Heart right ventricle (tissue), 16 donors: ENCODE measurements at regions of chr11 and their contacts with region 1.

Region 1: DNA sequence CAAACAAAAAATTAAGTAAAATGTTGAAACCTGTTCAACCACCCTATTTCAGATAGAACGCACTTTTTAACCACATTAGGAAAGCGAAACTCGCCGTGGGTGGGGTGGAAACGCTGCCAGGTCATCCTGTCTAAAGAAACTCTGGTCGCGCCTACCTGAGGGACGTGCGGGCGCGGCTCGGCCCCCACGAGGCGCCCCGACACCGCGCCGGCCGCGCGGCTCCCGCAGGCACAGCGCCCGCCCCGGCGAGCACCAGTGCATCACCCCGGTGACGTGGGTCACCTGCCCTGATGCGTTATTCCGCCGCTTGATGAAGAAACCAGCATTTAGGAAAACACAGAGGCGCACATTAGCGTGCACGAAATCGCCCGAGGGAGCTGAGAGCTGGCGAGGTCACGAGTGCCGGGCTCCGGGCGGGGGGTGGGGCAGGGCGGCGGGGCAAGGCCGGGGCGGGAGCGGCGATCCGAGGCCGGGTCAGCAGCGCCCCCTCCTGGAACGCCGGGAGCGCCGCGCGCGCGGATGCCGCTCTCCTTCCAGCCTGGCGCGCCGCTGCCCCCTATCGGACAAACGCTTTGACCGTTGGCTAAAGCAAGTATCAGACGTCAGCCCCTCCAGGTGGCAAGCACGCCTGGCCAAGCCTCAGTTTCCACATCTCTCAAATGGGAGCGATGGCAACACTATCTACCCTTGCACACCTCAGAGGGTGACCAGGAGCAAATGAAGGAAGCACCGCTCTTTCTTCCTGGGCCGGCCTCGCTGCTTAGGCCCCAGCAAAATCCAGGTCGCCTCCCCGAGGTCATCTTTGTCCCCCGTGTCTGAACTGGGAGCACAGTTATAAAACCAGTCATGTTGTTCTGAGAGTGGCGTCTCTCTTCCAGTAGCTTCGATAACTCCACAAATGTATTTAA is 15.7 kb upstream of the SNX32 start:
- DNase-seq: peak; percentile 94 to 97
- ATAC-seq: peak; percentile 92 to 97 (median 96)
- H3K4me3 ChIP-seq: peak overlapping the region; percentile 23 to 75 (median 62)
- H3K27ac ChIP-seq: peak overlapping the region in 9 of 10 donors; percentile 12 to 84 (median 59)
- H3K4me1 ChIP-seq: peaks cover 0 to 26% (median 9%) of the 10 kb centered on the region in 9 donors
- H3K27me3 ChIP-seq: no peaks in the 10 kb centered on the region
- CTCF ChIP-seq: peak; percentile 99 to 100 (median 100)

Region 2: GRCh38 chr11:65625628-65626342 is 192.3 kb before region 1 on chr11:
- intact Hi-C with region 1: loop called in 3 of 10 experiments (anchors 5 to 10 kb)
- DNase-seq: peak; percentile 54 to 69
- ATAC-seq: peak; percentile 51 to 84 (median 78)
- H3K4me3 ChIP-seq: no peak overlapping the region
- H3K27ac ChIP-seq: peak overlapping the region in 1 of 10 donors; percentile 9
- H3K4me1 ChIP-seq: peaks cover 0 to 22% (median 7%) of the 10 kb centered on the region in 9 donors
- H3K27me3 ChIP-seq: no peaks in the 10 kb centered on the region
- CTCF ChIP-seq: peak; percentile 54 to 75 (median 69)

Region 3: DNA sequence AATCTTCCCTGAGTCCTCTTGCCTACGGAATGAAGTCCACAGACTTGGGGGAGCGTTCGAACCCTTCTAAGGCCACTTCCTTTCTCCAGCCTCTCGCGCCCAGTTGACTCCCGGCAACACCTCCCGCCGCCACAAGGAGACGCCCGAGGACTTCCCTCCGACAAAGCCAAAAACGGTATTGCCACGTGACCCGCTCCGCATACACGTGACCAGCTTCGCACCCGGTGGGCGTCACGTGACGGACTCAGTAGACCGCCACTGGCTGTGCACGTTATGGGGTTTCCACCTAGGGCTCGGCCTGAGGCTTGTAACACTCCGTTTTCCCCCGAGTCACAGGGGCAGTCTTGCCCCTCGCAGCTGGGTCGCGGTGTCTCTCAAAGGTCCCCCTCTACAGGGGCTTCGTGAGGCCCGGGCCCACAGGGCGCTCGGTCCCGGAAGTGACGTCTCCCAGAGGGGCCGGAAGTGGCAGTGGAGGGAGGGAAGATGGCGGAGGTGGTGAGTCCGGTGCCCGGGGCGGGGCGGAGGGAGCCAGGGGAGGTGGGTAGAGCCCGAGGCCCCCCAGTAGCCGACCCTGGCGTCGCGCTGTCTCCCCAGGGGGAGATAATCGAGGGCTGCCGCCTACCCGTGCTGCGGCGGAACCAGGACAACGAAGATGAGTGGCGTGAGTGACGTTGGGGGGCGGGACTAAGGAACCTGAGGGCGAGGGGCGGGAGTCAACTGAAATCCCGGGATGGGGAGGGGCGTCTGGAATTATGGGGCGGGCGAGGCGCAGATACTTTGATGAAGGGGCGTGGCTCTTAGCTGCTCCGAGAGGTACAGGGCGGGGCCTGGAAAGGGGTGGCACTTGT is 106.1 kb before region 1 on chr11 and contains the start of gene KAT5:
- intact Hi-C with region 1: loop called (anchors 1 to 10 kb)
- DNase-seq: peak; percentile 98
- ATAC-seq: peak; percentile 92 to 96 (median 95)
- H3K4me3 ChIP-seq: peak within 1 kb of the TSS; percentile 39 to 82 (median 68)
- H3K27ac ChIP-seq: peak within 1 kb of the TSS; percentile 84 to 100 (median 98)
- H3K4me1 ChIP-seq: peaks cover 0 to 31% (median 21%) of the 10 kb centered on the region in 9 donors
- H3K27me3 ChIP-seq: no peaks in the 10 kb centered on the region
- CTCF ChIP-seq: peak; percentile 94 to 99 (median 98)
- total RNA-seq, gene KAT5: 40.9 to 53.6 (median 44.0) TPM

Region 4: GRCh38 chr11:65766535-65766934 is 51.6 kb before region 1 on chr11:
- intact Hi-C with region 1: loop called in 1 of 10 experiments (anchors 10 kb)
- DNase-seq: no peak
- ATAC-seq: no peak
- H3K4me3 ChIP-seq: no peak overlapping the region
- H3K27ac ChIP-seq: no peak overlapping the region
- H3K4me1 ChIP-seq: peaks cover 0 to 13% (median 0%) of the 10 kb centered on the region in 9 donors
- H3K27me3 ChIP-seq: no peaks in the 10 kb centered on the region
- CTCF ChIP-seq: no peak

Region 5: DNA sequence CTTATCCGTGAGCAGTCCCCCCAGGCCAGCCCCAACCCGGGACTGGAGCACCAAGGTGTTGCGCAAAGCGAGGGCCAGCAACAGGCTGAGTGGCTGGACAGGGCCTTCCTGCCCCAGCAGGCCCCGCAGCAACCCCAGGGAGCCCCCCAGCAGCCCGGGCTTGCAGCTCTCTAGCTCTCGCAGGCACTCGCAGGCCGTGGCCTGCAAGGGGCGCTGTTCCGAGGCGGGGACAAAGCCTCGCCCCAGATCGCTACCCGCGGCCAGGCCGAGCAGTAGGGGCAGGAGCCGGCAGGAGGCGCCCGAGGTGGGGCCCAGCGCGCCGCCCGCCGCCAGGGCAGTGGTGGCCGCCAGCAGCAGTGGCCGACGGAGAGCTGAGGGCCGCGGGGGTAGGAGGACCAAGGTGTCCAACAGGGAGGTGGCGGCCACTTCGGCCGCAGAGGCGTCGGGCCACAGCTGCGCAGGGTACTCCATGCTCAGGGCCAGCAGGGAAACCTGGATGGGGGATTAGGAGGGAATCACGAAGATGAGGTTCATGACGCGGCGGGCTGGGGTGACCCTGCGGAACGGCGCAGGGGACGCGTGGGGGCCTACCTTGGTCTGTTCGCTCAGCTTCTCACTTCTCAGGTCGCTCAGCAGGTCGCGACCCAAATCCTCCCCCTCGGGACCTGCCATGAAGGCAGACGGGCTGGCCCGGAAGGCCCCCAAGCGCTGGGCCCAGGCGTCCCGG is 38.1 kb before region 1 on chr11:
- intact Hi-C with region 1: loop called in 9 of 10 experiments (anchors 1 to 5 kb)
- DNase-seq: peak; percentile 69 to 82
- ATAC-seq: peak; percentile 81 to 92 (median 90)
- H3K4me3 ChIP-seq: peak overlapping the region; percentile 68 to 98 (median 92)
- H3K27ac ChIP-seq: peak overlapping the region in 9 of 10 donors; percentile 70 to 96 (median 82)
- H3K4me1 ChIP-seq: peaks cover 9 to 53% (median 16%) of the 10 kb centered on the region in 9 donors
- H3K27me3 ChIP-seq: peaks cover 0 to 11% (median 5%) of the 10 kb centered on the region in 7 donors
- CTCF ChIP-seq: peak; percentile 83 to 99 (median 95)

Region 6: GRCh38 chr11:65945430-65945911 is 127.4 kb after region 1 on chr11 and contains the start of gene TSGA10IP:
- intact Hi-C with region 1: no loop called
- DNase-seq: no peak
- ATAC-seq: no peak
- H3K4me3 ChIP-seq: no peak within 1 kb of the TSS
- H3K27ac ChIP-seq: no peak within 1 kb of the TSS
- H3K4me1 ChIP-seq: peaks cover 0 to 15% (median 0%) of the 10 kb centered on the region in 9 donors
- H3K27me3 ChIP-seq: peaks cover 0 to 17% (median 6%) of the 10 kb centered on the region in 7 donors
- CTCF ChIP-seq: no peak
- total RNA-seq, gene TSGA10IP: not detected

Region 7: DNA sequence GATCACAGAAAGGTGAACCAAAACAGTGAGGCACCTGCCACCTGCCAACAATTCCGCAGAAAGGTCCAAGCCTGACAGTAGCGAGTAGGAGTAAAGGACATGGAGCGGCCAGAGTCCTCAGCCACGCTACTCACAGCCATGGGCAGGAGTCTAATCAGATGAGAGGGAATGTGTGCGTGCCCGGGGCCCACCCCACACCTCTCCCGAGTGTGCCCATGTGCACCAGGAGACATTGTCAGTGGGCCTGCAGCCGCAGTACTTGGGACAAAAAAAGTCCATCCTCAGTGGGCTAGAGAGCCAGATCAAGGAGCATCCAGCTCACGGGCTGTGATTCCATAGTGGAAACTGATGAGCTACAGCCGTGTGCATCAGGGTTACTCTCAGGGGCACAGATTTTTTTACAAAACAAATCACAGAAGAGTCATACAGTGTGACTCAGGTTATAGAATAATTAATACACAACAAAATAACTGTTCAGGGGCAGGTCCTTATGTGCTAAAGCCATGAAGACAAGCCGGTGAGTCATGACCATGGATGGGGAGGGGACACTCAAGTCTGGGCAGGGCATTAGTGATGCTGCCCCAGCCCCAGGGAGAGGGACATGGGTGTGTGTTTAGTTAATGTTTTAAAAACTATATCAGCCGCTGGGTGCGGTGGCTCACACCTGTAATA is 155.5 kb after region 1 on chr11:
- intact Hi-C with region 1: no loop called
- DNase-seq: no peak
- ATAC-seq: no peak
- H3K4me3 ChIP-seq: no peak overlapping the region
- H3K27ac ChIP-seq: no peak overlapping the region
- H3K4me1 ChIP-seq: peaks cover 0 to 2% (median 0%) of the 10 kb centered on the region in 9 donors
- H3K27me3 ChIP-seq: no peaks in the 10 kb centered on the region
- CTCF ChIP-seq: no peak

Region 8: GRCh38 chr11:66498506-66498905 is 680.4 kb after region 1 on chr11:
- intact Hi-C with region 1: no loop called
- DNase-seq: no peak
- ATAC-seq: no peak
- H3K4me3 ChIP-seq: no peak overlapping the region
- H3K27ac ChIP-seq: no peak overlapping the region
- H3K4me1 ChIP-seq: no peaks in the 10 kb centered on the region
- H3K27me3 ChIP-seq: no peaks in the 10 kb centered on the region
- CTCF ChIP-seq: no peak